ENCODE measurements at regions of chr1 and their contacts with region 1.

Region 1: GRCh38 chr1:34270181-34270580 is 93.5 kb downstream of the C1orf94 start:
- DNase-seq: no peak
- H3K4me3 ChIP-seq: no peak overlapping the region
- CTCF ChIP-seq: no peak
- POLR2A ChIP-seq: no peak

Region 2: DNA sequence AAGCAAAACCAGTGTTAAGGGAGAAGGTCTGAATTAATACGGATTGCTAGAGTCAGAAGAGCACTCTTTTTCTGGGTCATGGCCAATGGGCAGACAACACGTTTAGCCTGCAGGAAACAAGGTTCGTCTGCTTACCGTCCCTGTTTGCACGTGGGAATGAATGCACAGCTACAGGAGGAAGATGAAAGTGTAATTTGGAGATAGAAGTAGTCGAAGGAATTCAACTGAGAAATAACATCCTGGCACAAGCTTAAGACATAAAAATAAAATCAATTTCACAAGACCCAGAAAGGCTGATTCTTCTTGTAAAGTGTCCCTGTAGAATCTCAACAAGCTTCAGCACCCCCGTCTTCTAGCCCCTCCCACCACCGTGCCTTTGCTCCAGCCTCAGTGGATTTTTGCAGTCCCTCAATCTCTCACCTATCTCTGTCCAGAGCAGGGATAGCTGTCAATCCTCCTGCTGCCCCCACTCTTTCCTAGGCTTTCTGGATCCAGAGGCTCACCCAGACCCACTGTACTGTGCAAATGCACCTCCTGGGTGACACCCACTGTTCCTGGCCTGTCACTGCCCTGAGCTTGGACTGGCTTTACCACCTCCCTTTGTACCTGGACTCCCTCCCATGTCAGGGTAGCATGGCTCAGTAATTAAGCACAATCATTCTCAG is 32.9 kb before region 1 on chr1:
- intact Hi-C with region 1: loop called (anchors 1 kb)
- DNase-seq: no peak
- H3K4me3 ChIP-seq: no peak overlapping the region
- CTCF ChIP-seq: no peak
- POLR2A ChIP-seq: no peak

Region 3: GRCh38 chr1:34500451-34500850 is 230.3 kb after region 1 on chr1:
- intact Hi-C with region 1: no loop called
- DNase-seq: no peak
- H3K4me3 ChIP-seq: no peak overlapping the region
- CTCF ChIP-seq: no peak
- POLR2A ChIP-seq: no peak

Measured in lower leg skin (tissue), 4 donors.